Pancreas (tissue), 10 donors: ENCODE measurements at regions of chrX and their contacts with region 1.

Region 1: DNA sequence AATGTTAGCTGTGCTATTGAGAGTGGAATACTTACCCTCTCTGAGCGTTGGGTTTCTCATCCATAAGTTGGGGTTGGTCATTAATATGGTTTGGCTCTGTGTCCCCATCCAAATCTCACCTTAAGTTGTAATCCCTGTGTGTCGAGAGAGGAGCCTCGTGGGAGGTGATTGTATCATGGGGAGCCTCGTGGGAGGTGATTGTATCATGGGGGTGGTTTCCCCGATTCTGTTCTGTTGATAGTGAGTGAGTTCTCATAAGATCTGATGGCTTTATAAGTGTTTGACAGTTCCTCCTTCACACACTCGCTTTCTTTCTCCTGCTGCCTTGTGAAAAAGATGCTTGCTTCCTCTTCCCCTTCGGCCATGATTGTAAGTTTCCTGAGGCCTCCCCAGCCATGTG is 391.1 kb downstream of the FAM133A start:
- DNase-seq: no peak
- ATAC-seq: no peak
- H3K4me3 ChIP-seq: no peak overlapping the region
- H3K27ac ChIP-seq: no peak overlapping the region
- H3K4me1 ChIP-seq: no peaks in the 10 kb centered on the region
- H3K27me3 ChIP-seq: no peaks in the 10 kb centered on the region
- CTCF ChIP-seq: no peak

Region 2: GRCh38 chrX:93520996-93521395 is 544.1 kb before region 1 on chrX:
- intact Hi-C with region 1: no loop called
- DNase-seq: no peak
- ATAC-seq: no peak
- H3K4me3 ChIP-seq: no peak overlapping the region
- H3K27ac ChIP-seq: no peak overlapping the region
- H3K4me1 ChIP-seq: no peaks in the 10 kb centered on the region
- H3K27me3 ChIP-seq: peaks cover 0 to 4% (median 0%) of the 10 kb centered on the region in 4 donors
- CTCF ChIP-seq: no peak

Region 3: GRCh38 chrX:93874554-93874953 is 190.5 kb before region 1 on chrX:
- intact Hi-C with region 1: loop called in 1 of 3 experiments (anchors 10 kb)
- DNase-seq: peak in 1 of 6 donors; percentile 32
- ATAC-seq: peak; percentile 48 to 79 (median 68)
- H3K4me3 ChIP-seq: no peak overlapping the region
- H3K27ac ChIP-seq: no peak overlapping the region
- H3K4me1 ChIP-seq: peaks cover 0 to 2% (median 0%) of the 10 kb centered on the region in 3 donors
- H3K27me3 ChIP-seq: peaks cover 0 to 6% (median 0%) of the 10 kb centered on the region in 4 donors
- CTCF ChIP-seq: peak; percentile 20 to 46 (median 35)